ENCODE measurements at regions of chr9 and their contacts with region 1.

Region 1: DNA sequence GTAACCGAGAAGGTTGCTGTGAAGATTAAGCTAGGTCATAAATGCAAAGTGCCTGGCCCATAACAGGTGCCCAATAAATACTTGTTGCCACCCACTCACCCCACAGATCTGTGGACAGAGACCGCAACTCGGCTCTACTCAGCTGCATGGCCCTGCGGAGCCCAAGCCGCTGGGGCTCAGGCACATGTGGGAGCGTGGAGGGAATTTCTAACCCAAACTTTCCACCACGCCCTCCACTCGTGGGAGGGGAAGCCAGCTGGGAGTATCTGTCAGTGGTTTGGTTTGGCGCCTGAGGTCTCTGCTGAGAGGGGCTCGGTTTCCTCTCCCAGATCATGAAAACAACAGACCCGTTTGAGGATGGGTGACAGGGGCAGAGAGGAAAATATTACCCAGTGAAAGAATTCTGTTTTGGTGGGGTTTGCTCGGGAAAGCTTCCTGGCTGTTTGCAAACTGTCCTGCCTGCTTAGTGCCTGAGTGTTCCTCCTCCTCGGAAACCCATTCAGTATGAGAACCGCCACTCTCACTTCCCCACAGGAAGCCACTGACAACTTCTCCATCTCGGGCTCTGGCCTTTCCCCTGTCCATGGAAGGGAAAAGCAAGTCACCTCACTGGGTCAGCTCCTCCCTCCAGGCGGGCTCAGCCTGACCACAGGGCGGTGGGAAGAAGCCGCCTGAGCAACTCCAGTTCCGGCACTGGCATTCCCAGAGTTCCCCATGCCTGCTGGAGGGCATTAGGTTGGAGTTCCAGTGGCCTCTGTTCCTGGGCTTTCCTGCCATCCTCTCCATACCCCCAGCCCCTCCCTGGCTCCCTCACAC is 60.1 kb downstream of the RGS3 start:
- DNase-seq: no peak
- H3K4me3 ChIP-seq: no peak overlapping the region
- H3K27ac ChIP-seq: peak overlapping the region in 1 of 2 donors; percentile 17
- H3K4me1 ChIP-seq: peaks cover 7% of the 10 kb centered on the region
- H3K27me3 ChIP-seq: no peaks in the 10 kb centered on the region
- CTCF ChIP-seq: no peak
- POLR2A ChIP-seq: no peak

Region 2: DNA sequence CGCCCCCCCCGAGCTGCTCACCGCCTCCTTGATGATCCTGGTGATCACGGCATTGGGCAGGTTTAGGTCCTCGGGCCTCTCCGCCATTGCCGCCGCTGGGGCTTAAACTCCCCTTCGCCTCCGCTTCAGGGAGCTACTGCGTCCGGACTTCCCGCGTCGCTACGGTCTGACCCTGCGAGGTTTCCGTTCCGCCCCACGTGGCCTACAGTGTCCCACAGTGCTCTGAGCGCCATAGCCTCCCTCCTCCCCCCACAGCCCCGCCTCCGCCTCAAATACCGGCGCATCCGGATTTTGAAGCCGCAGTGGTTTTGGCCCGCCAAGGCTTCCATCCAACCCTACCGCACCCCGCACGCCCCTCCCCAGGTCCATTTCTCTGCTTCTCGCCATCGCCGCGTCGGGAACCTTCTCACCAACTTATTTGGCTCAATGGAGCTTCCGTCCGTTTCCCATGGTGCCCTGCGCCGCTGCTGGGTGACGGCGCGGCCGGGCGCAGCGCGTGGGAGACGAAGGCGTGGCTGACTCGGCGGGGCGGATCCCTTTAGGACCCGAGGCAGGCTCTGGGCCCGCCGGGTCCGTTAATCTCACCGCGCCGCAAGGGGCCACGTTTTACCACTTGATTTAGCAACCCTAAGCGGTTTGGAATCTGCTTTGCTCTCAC is 113.3 kb before region 1 on chr9 and contains the starts of genes C9orf43 and POLE3:
- intact Hi-C with region 1: no loop called
- DNase-seq: peak; percentile 91
- H3K4me3 ChIP-seq: peak within 1 kb of the TSS; percentile 74 to 83
- H3K27ac ChIP-seq: peak within 1 kb of the TSS; percentile 96 to 98
- H3K4me1 ChIP-seq: peaks cover 3% of the 10 kb centered on the region
- H3K27me3 ChIP-seq: no peaks in the 10 kb centered on the region
- CTCF ChIP-seq: peak in 1 of 4 experiments; percentile 13
- POLR2A ChIP-seq: peak; percentile 56
- total RNA-seq, gene C9orf43: 3.7 to 11.0 TPM
- total RNA-seq, gene POLE3: 42.7 to 61.9 TPM

Region 3: DNA sequence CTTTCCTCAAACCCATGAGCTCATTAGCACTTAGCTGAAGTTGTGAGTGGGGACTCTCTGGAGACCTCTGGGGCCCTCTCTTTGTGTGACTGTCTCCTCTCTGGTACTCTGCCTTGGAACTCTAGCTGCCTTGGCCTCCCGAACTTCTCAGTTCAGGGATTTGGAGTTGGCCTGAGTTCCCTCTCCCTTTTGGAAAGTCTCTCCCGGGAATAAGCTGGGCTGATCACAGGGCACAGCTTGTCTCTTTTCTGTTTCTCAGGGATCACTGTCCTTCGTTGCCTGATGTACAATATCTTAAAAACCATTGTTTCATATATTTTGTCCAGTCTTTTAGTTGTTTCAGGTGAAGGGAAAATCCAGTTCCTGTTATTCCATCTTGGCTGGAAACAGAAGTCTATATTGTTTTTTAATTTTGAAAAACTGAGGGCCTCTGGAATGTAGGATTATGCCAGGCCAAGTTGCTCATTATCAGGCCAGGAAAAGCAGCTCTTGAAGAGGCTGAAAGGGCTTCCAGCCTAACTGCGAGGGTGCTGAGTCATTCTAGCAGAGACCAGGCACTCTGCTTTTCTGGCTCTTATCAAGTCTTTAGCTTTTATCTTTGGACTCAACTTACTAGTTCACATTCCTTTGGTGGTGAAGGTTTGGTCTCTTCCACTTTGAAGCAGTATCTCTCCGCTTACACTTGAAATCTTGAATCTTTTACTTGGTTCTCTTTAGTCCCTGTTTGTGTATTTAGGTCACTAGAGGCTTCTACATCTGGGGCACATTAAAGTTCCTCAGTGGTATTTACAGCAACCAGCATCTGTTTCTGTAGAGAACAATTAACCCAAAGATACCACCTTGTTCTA is 68.5 kb before region 1 on chr9:
- intact Hi-C with region 1: loop called (anchors 5 kb)
- DNase-seq: no peak
- H3K4me3 ChIP-seq: no peak overlapping the region
- H3K27ac ChIP-seq: peak overlapping the region; percentile 66 to 71
- H3K4me1 ChIP-seq: no peaks in the 10 kb centered on the region
- H3K27me3 ChIP-seq: no peaks in the 10 kb centered on the region
- CTCF ChIP-seq: no peak
- POLR2A ChIP-seq: no peak

Region 4: GRCh38 chr9:113488490-113488889 is 35.1 kb before region 1 on chr9:
- intact Hi-C with region 1: loop called (anchors 5 kb)
- DNase-seq: no peak
- H3K4me3 ChIP-seq: no peak overlapping the region
- H3K27ac ChIP-seq: no peak overlapping the region
- H3K4me1 ChIP-seq: peaks cover 4% of the 10 kb centered on the region
- H3K27me3 ChIP-seq: no peaks in the 10 kb centered on the region
- CTCF ChIP-seq: no peak
- POLR2A ChIP-seq: no peak

Region 5: GRCh38 chr9:113564498-113565237 is 41.0 kb after region 1 on chr9:
- intact Hi-C with region 1: loop called (anchors 5 kb)
- DNase-seq: peak; percentile 61
- H3K4me3 ChIP-seq: peak overlapping the region; percentile 32 to 39
- H3K27ac ChIP-seq: peak overlapping the region; percentile 84 to 93
- H3K4me1 ChIP-seq: peaks cover 18% of the 10 kb centered on the region
- H3K27me3 ChIP-seq: no peaks in the 10 kb centered on the region
- CTCF ChIP-seq: no peak
- POLR2A ChIP-seq: peak; percentile 62

Region 6: DNA sequence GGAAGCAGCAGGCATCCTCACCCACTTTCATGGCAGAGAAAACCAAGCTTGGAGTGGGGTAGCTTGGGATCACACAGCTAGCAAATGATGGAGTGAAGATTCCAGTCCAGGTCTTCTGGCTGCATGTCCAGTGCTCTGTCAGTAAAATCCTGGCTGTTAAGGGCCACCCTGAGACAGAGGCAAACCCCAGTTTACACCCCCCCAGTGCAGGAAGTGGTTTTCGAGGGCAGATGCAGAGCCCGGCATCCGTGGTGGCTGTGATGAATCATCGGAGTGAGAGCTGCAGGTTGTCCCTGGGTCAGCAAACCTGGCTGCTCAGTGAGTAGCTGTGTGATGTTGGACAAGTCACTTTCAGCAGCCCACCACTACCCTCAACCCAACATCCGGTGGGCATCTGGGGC is 55.3 kb after region 1 on chr9:
- intact Hi-C with region 1: no loop called
- DNase-seq: no peak
- H3K4me3 ChIP-seq: no peak overlapping the region
- H3K27ac ChIP-seq: peak overlapping the region; percentile 80 to 83
- H3K4me1 ChIP-seq: peaks cover 36% of the 10 kb centered on the region
- H3K27me3 ChIP-seq: no peaks in the 10 kb centered on the region
- CTCF ChIP-seq: no peak
- POLR2A ChIP-seq: no peak

Region 7: DNA sequence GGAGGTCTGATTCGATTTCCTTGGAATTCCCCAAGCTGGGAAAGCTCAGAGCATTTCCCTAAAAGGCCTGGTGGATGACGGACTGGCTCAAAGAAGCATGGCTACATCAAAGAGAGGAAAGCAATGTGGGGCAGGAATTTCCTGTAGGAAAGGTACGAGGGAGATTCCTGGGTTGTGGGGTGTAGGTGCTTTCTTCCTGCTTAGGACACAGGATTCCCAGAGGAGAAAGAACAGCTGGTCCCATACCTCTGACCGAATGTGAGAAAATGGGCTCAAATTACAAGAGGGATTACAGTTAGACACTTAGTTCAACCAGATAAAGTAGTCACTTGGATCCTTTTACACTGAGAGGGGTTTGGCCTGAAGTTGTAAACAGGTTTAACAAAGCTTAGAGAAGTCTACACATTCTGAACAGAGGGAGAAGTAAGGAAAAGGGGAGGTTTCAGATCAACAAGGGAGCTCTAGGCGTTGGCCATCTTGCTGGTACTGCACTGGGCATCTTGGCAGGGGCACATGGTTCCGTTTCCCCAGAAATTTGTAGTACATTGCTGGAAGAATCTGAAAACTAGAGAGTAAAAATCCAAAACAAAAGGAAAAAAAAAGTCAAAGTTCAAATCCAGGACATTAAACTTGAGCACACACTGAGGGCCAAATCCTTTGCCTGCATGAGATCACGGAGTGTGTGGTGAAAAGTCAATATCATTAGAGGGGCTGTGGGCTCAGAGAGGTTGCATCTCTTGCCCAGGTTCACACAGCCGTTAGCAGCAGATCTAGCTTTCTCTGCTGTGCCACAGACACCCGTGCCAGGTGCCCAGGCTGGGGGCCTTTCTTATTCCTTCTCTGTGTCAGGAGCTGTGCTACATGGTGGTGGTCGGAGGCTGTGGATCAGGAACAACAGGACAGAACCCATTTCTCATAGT is 111.2 kb after region 1 on chr9:
- intact Hi-C with region 1: no loop called
- DNase-seq: no peak
- H3K4me3 ChIP-seq: no peak overlapping the region
- H3K27ac ChIP-seq: peak overlapping the region in 1 of 2 donors; percentile 10
- H3K4me1 ChIP-seq: no peaks in the 10 kb centered on the region
- H3K27me3 ChIP-seq: no peaks in the 10 kb centered on the region
- CTCF ChIP-seq: no peak
- POLR2A ChIP-seq: no peak